Activated naive CD4-positive, alpha-beta T cell treated with anti-CD3 and anti-CD28 coated beads for 36 hours (primary cell): ENCODE measurements at regions of chr1 and their contacts with region 1.

Region 1: DNA sequence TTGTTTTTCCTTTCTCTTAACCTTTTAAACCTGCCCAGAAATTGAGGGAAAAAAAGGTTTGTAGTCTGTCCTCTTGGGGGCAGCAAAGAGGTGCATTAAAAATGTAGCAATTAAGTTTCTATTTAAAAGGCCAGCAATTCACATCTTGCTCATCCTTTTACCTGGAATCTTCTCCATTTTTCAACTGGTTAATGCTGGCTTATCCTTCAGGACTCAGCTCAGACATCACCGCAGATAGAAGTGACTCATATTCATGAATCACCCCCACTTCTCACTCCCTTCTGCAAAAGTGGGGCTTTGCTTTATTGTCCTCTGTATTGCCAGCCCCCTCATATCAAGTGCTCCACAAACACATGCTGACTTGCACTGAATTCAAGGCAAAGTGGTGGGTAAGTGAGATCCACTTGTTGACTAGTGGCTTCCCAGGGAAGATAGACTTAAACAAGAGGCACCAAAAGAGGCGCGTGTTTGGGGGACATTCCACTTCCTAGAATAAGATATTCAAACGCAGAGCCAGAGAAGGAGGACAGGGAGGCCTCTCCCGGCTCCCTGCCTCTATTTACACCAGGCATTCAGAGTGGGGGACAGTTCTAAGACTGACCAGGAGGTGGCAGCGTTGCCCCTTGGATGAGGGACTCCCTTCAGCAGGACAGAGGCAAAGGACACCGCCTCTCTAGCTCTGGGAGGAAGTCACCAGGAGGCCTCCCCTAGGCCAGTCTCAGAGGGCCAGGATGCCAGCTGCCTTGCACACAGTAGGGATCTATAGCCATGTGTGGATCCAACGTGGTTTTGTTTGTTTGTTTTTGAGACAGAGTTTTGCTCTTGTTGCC is 23.2 kb upstream of the ZNF648 start:
- DNase-seq: peak; percentile 93
- H3K4me3 Mint-ChIP-seq: no peak overlapping the region
- H3K27ac Mint-ChIP-seq: peak overlapping the region; percentile 25
- H3K4me1 Mint-ChIP-seq: peaks cover 40% of the 10 kb centered on the region
- H3K27me3 Mint-ChIP-seq: no peaks in the 10 kb centered on the region

Region 2: GRCh38 chr1:182054698-182055326 is 29.9 kb before region 1 on chr1:
- CTCF ChIA-PET with region 1: interaction called, 17 read pairs
- intact Hi-C with region 1: no loop called
- DNase-seq: peak; percentile 83
- H3K4me3 Mint-ChIP-seq: no peak overlapping the region
- H3K27ac Mint-ChIP-seq: no peak overlapping the region
- H3K4me1 Mint-ChIP-seq: peaks cover 12% of the 10 kb centered on the region
- H3K27me3 Mint-ChIP-seq: peaks cover 20% of the 10 kb centered on the region

Region 3: GRCh38 chr1:182120411-182121239 is 35.9 kb after region 1 on chr1:
- CTCF ChIA-PET with region 1: no interaction called
- intact Hi-C with region 1: no loop called
- DNase-seq: no peak
- H3K4me3 Mint-ChIP-seq: no peak overlapping the region
- H3K27ac Mint-ChIP-seq: no peak overlapping the region
- H3K4me1 Mint-ChIP-seq: no peaks in the 10 kb centered on the region
- H3K27me3 Mint-ChIP-seq: no peaks in the 10 kb centered on the region

Region 4: GRCh38 chr1:182198049-182198501 is 113.4 kb after region 1 on chr1:
- CTCF ChIA-PET with region 1: interaction called, 3 read pairs
- intact Hi-C with region 1: loop called (anchors 2 kb)
- DNase-seq: no peak
- H3K4me3 Mint-ChIP-seq: no peak overlapping the region
- H3K27ac Mint-ChIP-seq: no peak overlapping the region
- H3K4me1 Mint-ChIP-seq: no peaks in the 10 kb centered on the region
- H3K27me3 Mint-ChIP-seq: no peaks in the 10 kb centered on the region

Region 5: GRCh38 chr1:182397771-182398393 is 313.2 kb after region 1 on chr1:
- CTCF ChIA-PET with region 1: interaction called, 106 read pairs
- intact Hi-C with region 1: loop called (anchors 1 kb)
- DNase-seq: no peak
- H3K4me3 Mint-ChIP-seq: no peak overlapping the region
- H3K27ac Mint-ChIP-seq: no peak overlapping the region
- H3K4me1 Mint-ChIP-seq: no peaks in the 10 kb centered on the region
- H3K27me3 Mint-ChIP-seq: no peaks in the 10 kb centered on the region

Region 6: GRCh38 chr1:182781841-182782586 is 697.3 kb after region 1 on chr1:
- CTCF ChIA-PET with region 1: no interaction called
- intact Hi-C with region 1: loop called (anchors 1 kb)
- DNase-seq: peak; percentile 89
- H3K4me3 Mint-ChIP-seq: no peak overlapping the region
- H3K27ac Mint-ChIP-seq: no peak overlapping the region
- H3K4me1 Mint-ChIP-seq: peaks cover 18% of the 10 kb centered on the region
- H3K27me3 Mint-ChIP-seq: no peaks in the 10 kb centered on the region